ENCODE measurements at regions of chr19 and their contacts with region 1.

Region 1: DNA sequence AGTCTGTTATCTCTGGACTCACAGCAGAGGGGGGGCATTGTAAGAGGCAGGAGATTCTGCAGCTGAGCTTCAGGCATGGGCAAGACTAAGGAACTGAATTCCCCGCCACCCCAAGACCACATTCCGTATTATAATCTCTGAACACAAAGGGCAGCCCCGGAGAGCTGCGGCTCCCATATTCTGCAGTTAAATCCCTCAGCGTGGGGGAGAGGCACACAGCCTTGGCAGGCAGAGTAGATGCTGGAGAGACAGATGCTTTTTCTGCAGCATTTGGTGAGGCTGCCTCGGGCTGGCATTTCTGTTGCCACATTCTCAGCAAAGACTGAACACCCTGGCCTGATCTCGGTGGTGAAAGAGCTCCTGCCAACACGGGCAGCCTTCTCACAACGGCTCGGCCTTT is 12.9 kb downstream of the CHAF1A start:
- DNase-seq: no peak
- H3K4me3 ChIP-seq: no peak overlapping the region
- H3K27ac ChIP-seq: no peak overlapping the region
- H3K4me1 ChIP-seq: no peaks in the 10 kb centered on the region
- H3K27me3 ChIP-seq: no peaks in the 10 kb centered on the region
- CTCF ChIP-seq: no peak

Region 2: GRCh38 chr19:4272894-4273293 is 142.5 kb before region 1 on chr19:
- CTCF ChIA-PET with region 1: no interaction called
- dilution Hi-C with region 1: loop called (anchors 5 kb)
- in situ Hi-C with region 1: no loop called
- intact Hi-C with region 1: no loop called
- DNase-seq: no peak
- H3K4me3 ChIP-seq: no peak overlapping the region
- H3K27ac ChIP-seq: no peak overlapping the region
- H3K4me1 ChIP-seq: no peaks in the 10 kb centered on the region
- H3K27me3 ChIP-seq: no peaks in the 10 kb centered on the region
- CTCF ChIP-seq: no peak

Region 3: GRCh38 chr19:4328243-4328990 is 86.9 kb before region 1 on chr19:
- CTCF ChIA-PET with region 1: no interaction called
- dilution Hi-C with region 1: loop called (anchors 5 kb)
- in situ Hi-C with region 1: no loop called
- intact Hi-C with region 1: no loop called
- DNase-seq: no peak
- H3K4me3 ChIP-seq: peak overlapping the region in 2 of 3 experiments; percentile 37 to 46
- H3K27ac ChIP-seq: no peak overlapping the region
- H3K4me1 ChIP-seq: peaks cover 3% of the 10 kb centered on the region
- H3K27me3 ChIP-seq: no peaks in the 10 kb centered on the region
- CTCF ChIP-seq: no peak

Region 4: DNA sequence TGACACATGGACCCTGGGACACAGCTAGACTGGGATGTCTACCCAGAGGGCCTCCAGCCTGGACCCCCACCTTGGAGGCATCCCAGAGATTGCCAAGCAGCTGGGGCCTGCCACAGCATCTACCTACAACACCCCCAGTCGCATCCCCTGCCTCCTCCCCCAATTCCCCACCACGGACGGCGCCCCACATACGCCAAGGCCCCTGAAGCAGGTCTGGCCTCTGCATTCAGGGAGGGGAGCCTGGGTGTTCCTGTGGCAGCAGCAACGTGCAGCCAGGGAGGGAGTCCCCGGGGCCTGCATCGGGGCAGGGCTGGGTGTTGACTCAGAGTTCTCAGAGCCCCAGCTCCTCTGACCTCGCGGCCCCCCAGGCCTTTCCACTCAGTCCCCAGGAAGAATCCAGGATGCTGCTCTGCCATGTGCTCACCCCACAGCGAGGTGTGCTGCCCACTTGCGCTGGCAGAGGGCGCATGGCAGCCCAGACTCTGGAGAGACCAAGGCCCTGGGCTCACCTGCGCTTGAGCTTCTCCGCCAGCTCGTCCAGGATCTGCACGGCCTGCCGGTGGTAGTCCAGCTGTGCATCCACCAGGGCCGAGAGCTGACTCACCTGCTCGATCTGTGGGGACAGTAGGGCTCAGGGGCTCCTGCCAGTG is 52.4 kb before region 1 on chr19:
- CTCF ChIA-PET with region 1: no interaction called
- dilution Hi-C with region 1: loop called (anchors 5 kb)
- in situ Hi-C with region 1: no loop called
- intact Hi-C with region 1: no loop called
- DNase-seq: no peak
- H3K4me3 ChIP-seq: no peak overlapping the region
- H3K27ac ChIP-seq: no peak overlapping the region
- H3K4me1 ChIP-seq: peaks cover 3% of the 10 kb centered on the region
- H3K27me3 ChIP-seq: no peaks in the 10 kb centered on the region
- CTCF ChIP-seq: peak; percentile 21 to 30

Measured in mammary epithelial cell (primary cell).